Thyroid gland (tissue), 4 donors: ENCODE measurements at regions of chr11 and their contacts with region 1.

Region 1: DNA sequence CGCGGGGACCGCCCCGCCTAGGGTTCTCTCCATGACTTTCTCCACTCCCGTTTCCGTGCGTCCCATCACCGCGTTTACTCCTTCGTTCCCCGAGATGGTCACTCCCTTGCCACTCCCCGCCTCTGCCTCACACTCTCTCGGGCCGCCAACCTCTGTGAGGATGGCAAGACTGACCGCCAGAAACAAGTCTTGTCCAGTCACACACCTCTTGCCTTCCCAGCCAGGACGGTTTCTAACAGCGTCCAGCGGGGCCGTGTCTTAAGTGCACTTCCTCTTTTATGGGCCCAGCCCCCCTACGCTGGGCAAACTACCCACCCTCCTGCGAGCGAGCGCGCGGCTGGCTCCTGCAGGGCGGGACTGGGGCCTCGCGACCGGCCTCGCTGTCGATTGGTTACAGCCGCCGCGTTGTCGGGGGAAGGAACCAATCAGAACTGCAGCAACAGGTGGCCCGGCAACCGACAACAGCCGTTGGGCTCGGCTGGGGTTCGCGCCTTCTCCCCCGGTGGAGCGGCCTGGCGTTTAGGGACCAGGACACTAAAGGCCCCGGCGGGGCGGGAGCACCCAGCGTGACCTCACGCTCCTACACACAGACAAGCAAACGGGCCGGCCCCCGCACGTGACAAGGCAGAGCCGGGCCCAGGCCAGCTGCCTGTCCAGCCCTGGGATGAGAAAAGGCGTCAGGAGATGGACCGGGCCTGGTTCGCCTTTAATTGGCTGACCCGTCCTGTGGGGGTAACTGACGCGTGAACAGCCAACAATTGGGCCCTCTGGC is 512 bp upstream of the UCP2 start:
- DNase-seq: peak; percentile 95
- H3K4me3 ChIP-seq: peak overlapping the region; percentile 18 to 76 (median 51)
- H3K27ac ChIP-seq: peak overlapping the region; percentile 83 to 93 (median 92)
- H3K4me1 ChIP-seq: peaks cover 21 to 28% of the 10 kb centered on the region in 2 donors
- H3K27me3 ChIP-seq: no peaks in the 10 kb centered on the region
- CTCF ChIP-seq: no peak
- POLR2A ChIP-seq: peak; percentile 60 to 73

Region 2: GRCh38 chr11:73876424-73877300 is 106.5 kb before region 1 on chr11 and contains the starts of genes COA4 and PAAF1:
- intact Hi-C with region 1: no loop called
- DNase-seq: peak; percentile 94
- H3K4me3 ChIP-seq: peak within 1 kb of the TSS; percentile 62 to 72 (median 71)
- H3K27ac ChIP-seq: peak within 1 kb of the TSS; percentile 49 to 74 (median 55)
- H3K4me1 ChIP-seq: peaks cover 12 to 14% of the 10 kb centered on the region in 2 donors
- H3K27me3 ChIP-seq: no peaks in the 10 kb centered on the region
- CTCF ChIP-seq: no peak
- POLR2A ChIP-seq: peak in 1 of 2 donors; percentile 79
- total RNA-seq, gene COA4: 62.9 to 117 (median 103) TPM
- total RNA-seq, gene PAAF1: 10.0 to 23.3 (median 15.9) TPM

Region 3: DNA sequence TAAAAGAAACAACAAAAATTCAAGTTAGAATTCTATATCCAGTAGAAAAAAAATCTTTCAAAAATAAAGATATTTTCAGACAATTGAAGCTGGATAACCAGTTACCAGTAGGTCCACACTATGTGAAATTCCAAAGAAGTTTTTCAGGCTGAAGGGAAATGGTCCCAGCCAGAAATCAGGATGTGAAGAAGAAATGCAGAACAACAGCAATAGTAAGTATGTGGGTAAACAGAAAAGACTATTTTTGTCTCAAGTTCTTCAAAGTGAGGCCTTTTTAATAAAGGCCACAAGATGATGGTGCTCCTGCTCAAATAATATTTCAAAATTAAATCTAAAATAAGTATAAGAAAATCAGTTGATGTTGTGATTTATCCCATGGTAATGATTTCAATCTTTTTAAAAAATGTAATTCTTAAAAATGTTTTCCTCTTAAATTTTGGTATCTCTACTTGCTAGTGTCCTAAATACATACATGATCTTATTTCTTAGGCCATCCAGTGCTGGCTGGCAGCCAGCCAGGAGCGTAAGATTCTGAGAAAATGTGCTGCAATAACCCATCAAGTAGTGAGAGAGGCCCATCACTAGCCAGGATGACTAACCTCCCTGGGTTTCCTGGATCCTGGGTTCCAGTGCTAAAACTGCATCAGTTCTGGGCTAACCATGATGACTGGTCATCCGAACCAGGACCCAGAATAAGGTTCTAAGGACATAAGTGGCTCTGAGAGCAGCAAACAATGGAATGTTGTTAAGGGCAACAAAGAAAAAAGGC is 41.3 kb after region 1 on chr11:
- intact Hi-C with region 1: loop called (anchors 5 kb)
- DNase-seq: peak; percentile 60 to 64
- H3K4me3 ChIP-seq: no peak overlapping the region
- H3K27ac ChIP-seq: peak overlapping the region in 1 of 3 donors; percentile 35
- H3K4me1 ChIP-seq: peaks cover 5 to 33% of the 10 kb centered on the region in 2 donors
- H3K27me3 ChIP-seq: no peaks in the 10 kb centered on the region
- CTCF ChIP-seq: no peak
- POLR2A ChIP-seq: no peak

Region 4: GRCh38 chr11:74069147-74070047 is 86.2 kb after region 1 on chr11:
- intact Hi-C with region 1: no loop called
- DNase-seq: peak; percentile 59 to 68
- H3K4me3 ChIP-seq: no peak overlapping the region
- H3K27ac ChIP-seq: peak overlapping the region; percentile 94 to 99 (median 98)
- H3K4me1 ChIP-seq: peaks cover 45 to 52% of the 10 kb centered on the region in 2 donors
- H3K27me3 ChIP-seq: no peaks in the 10 kb centered on the region
- CTCF ChIP-seq: no peak
- POLR2A ChIP-seq: no peak